Activated T-helper 2 cell treated with anti-CD3 and anti-CD28 coated beads, Interferon-gamma antibody, Interleukin-2, Interleukin-4, amounts not matched to agents 10 μg/mL and 5 μg/mL and 100 μg/mL, durations not matched to agents 14 hours and 24 hours and 36 hours (primary cell): ENCODE measurements at regions of chr1 and their contacts with region 1.

Region 1: DNA sequence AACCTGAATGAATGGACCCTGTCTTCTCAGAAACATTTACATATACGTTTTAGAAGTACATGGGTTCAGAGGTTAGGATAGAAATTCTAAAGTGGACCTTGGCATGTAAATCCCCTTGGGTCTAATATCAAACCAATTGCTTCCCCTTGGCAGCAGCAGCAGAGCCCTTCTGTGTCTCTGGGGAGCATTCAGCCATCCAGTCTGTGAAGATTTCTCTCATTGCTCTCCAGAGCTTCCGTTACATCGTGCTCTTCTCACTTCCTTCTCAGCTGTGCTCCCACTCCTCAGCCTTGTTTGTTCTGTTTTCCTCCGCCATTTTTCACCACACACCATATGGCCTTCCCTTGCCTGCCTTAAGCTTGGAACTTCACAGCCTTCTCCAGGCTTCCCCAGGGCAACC is 61.5 kb upstream of the ATP1B1 start:
- DNase-seq: no peak
- H3K4me3 Mint-ChIP-seq: peak overlapping the region; percentile 5
- H3K27ac Mint-ChIP-seq: peak overlapping the region; percentile 58
- H3K4me1 Mint-ChIP-seq: peaks cover 69% of the 10 kb centered on the region
- H3K27me3 Mint-ChIP-seq: no peaks in the 10 kb centered on the region

Region 2: DNA sequence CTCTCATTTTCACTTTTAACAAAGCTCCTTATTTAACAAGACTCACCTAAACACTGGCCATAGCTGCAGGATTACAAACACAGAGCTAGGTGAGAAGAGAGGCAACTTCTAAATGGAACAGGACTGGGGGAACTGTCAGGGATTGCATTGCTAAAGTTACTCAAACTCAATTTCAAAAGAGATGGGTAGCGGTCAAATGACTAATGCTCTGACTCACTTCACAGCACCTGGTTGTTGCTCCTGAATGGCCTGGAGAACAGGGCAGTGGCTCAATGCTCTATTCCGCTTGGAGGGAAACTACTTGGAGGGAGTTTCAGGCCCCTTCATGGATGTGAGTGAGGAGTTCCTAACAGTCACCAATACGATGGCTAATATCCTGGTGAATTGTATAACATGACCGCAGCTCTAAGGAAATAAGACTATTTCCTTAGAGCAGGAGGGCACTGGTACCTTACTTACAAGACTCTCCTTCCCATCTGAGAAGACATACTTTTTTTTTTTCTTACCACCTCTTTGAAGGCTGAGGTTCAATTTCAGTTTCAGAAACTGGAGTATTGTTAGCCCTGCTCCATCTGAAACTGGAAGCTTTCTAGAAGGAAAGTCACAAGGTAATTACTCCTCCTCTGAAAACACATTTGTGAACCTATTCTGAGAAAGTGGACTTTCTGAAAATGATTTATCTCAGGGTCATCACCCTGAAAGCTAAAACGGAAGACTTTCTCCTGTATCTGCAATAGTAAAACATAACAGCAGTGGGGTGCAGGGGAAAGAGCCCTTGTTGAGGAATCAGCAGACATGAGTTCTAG is 325.5 kb before region 1 on chr1:
- intact Hi-C with region 1: no loop called
- DNase-seq: no peak
- H3K4me3 Mint-ChIP-seq: no peak overlapping the region
- H3K27ac Mint-ChIP-seq: no peak overlapping the region
- H3K4me1 Mint-ChIP-seq: no peaks in the 10 kb centered on the region
- H3K27me3 Mint-ChIP-seq: peaks cover 17% of the 10 kb centered on the region

Region 3: DNA sequence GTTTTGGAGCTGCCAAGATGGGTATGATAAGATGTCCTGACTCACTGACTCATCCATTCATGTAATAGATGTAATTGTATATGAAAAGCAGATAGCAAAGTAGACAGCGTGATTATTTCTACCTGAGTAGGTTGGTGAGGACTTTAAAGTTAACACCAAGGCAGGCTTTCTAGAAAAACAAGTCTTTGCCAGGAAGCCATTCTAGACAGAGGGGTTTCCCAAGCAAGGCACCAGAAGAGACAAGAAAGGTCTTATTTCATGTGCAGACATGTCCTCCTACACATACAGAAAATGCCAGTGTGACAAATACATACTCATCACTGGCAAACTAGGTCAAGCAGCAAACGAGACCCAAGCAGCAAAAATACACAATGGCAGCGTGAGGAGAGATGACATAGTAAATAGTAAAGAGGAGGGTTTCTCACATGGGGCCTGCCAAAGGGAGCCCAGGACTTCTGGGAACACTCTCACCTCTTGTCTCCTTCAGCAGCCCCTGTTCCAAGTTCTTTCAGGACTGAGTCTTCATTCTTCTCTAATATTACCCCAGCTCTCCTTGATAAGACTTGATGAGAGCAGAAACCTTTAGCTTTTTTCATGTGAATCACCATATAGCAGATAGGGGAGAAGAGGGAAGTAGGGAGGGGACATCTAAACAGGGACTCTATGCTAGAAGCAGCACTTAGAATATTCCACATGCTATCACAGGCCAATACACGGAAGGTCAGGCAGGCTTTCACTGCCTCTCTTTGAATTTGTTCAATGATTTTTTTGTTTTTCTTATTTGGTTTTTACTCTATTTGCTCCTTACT is 53.1 kb before region 1 on chr1:
- intact Hi-C with region 1: loop called (anchors 1 kb)
- DNase-seq: no peak
- H3K4me3 Mint-ChIP-seq: no peak overlapping the region
- H3K27ac Mint-ChIP-seq: peak overlapping the region; percentile 64
- H3K4me1 Mint-ChIP-seq: peaks cover 16% of the 10 kb centered on the region
- H3K27me3 Mint-ChIP-seq: peaks cover 3% of the 10 kb centered on the region

Region 4: DNA sequence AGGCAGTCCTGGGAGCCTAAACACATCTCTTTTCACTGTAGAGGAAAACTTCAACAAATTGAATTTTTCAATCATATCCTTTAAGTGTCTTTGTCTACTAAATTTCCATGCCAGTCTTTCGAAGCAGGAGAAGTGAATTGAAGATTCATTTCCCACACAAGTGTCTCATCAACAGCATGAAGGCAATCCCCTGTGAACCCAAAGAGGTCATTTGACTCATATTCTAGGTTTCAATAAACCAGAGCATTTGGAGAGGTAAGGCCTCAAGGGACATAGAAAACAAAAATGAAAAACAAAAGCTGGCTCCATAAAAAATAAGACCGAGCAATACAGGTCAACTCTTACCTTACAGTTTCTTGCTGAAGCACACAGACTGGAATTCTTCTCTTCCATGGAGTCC is 32.6 kb before region 1 on chr1:
- intact Hi-C with region 1: loop called (anchors 2 kb)
- DNase-seq: no peak
- H3K4me3 Mint-ChIP-seq: no peak overlapping the region
- H3K27ac Mint-ChIP-seq: peak overlapping the region; percentile 9
- H3K4me1 Mint-ChIP-seq: peaks cover 11% of the 10 kb centered on the region
- H3K27me3 Mint-ChIP-seq: no peaks in the 10 kb centered on the region

Region 5: GRCh38 chr1:169091480-169091941 is 46.5 kb after region 1 on chr1:
- intact Hi-C with region 1: loop called (anchors 2 kb)
- DNase-seq: no peak
- H3K4me3 Mint-ChIP-seq: no peak overlapping the region
- H3K27ac Mint-ChIP-seq: no peak overlapping the region
- H3K4me1 Mint-ChIP-seq: peaks cover 8% of the 10 kb centered on the region
- H3K27me3 Mint-ChIP-seq: peaks cover 9% of the 10 kb centered on the region